Left colon (tissue), 2 donors: ENCODE measurements at regions of chr3 and their contacts with region 1.

Region 1: DNA sequence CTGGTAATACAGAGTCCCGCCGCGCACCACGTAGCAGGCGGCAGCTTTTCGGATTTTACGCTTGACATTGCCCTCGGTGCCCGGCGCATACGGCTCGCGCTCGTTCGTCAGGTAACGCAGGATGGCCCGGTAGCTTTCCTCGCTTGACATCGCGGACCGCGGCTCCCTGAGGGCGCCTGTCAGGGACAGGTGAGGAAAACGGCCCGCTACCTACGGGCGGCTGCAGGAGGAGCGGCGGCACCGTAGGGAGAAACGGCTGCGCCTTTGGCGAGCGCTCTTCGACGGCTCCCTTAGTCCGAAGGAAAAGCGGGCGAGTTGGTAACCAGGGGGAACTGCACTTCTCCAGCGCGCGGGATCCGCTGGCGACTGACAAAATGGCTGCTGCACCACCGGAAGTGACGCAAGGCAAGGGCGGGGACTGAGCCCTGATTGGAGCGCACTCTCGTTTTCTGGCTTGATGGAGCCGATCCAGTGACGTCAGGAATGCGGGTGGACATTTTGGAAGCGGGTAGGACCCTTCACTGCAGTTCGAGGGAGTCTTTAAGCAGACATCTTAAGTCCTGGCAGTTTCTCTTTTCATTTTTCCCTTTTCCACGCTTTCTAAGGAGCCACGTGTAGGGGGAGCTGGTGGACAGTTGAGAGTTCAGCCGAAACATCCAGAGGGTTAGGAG is at the start of gene ZBTB11:
- DNase-seq: peak; percentile 100
- ATAC-seq: peak; percentile 86
- total RNA-seq, gene ZBTB11: 11.5 to 13.2 TPM

Region 2: GRCh38 chr3:101573449-101574387 is 103.2 kb before region 1 on chr3 and contains the start of gene PCNP:
- intact Hi-C with region 1: loop called in 1 of 2 experiments (anchors 10 kb)
- DNase-seq: peak; percentile 99 to 100
- ATAC-seq: peak; percentile 87
- total RNA-seq, gene PCNP: 87.2 to 99.6 TPM

Region 3: GRCh38 chr3:101827211-101828174 is 150.6 kb after region 1 on chr3:
- intact Hi-C with region 1: no loop called
- DNase-seq: peak; percentile 84 to 85
- ATAC-seq: peak; percentile 86